Activated B cell treated with CpG ODN at 0.5 μM for 24 hours (primary cell): ENCODE measurements at regions of chr5 and their contacts with region 1.

Region 1: DNA sequence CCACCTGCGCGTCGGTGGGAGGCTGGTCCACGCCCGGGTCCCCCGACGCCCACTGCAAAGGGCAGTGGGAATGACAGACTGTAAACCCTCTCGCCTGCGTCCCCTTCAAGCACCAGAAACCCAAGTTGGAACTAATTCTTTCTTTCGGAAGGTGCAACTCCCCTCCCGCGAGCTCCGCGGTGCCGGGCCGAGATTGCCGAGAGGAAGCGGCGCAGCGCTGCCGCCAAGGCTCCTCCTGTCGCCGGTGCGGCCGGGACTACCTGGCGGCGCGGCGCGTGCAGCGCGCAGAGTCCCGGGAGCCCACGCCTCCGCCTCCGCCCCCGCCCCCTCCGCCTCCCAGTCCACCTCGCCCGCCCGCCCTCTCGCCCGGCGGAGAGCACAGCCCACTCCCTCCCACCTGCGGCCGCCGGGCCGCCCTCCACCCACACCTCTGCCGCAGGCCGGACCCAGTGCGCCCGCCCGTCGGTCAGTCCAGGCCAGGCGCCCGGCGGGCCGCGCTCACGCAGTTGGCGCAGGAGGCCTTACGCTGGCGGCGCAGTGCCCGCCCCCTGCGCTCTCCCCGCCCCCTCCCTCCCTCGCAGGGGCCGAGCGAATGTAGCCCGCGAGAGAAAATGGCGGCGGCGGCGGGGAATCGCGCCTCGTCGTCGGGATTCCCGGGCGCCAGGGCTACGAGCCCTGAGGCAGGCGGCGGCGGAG is at the start of gene MAP3K1:
- DNase-seq: peak; percentile 86
- ATAC-seq: peak; percentile 63
- H3K4me3 Mint-ChIP-seq: peak within 1 kb of the TSS; percentile 93
- H3K27ac Mint-ChIP-seq: peak within 1 kb of the TSS; percentile 93
- H3K4me1 Mint-ChIP-seq: peaks cover 50% of the 10 kb centered on the region
- H3K27me3 Mint-ChIP-seq: no peaks in the 10 kb centered on the region
- CTCF ChIP-seq: no peak
- total RNA-seq, gene MAP3K1: 92.8 and 102 TPM in 2 replicates

Region 2: DNA sequence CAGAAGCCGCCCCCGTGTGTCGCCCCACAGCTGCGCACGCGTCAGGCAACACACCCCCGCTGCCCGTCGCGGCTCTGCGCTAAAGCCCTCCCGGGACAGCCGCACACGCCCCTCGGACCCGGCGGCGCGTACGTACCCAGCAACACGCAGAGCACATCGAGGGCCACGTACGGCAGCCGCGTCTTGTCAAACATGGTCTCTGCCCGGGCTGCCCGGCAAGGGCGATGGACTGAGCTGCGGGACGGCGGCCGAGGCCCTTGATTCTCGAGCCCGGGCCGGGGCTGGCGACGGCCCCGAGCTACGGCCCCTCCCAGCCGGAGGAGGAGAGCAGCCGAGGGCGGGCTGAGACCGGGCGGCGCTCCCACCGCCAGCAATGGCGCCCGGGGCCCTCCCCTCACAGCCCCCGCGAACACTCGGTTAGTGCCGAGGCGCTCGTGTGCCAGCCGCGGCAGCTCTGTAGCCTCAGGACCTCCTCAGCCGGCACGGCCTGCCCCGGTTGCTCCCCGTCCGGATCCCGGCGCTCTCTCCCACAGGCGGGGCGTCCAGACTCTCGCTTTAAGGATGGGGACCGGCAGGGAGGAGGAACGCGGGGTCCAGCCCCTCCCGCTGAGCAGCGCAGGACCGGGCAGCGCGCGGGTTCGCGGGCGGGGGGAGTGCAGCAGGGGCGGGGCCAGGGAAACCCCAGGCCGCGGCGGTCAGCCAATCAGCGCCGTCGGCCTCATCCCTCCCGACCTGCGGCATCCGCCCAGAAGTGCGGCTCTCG is 1280.5 kb before region 1 on chr5 and contains the start of gene PLPP1:
- CTCF ChIA-PET with region 1: no interaction called
- POLR2A ChIA-PET with region 1: no interaction called
- intact Hi-C with region 1: loop called (anchors 10 kb)
- DNase-seq: peak; percentile 89
- ATAC-seq: peak; percentile 79
- H3K4me3 Mint-ChIP-seq: peak within 1 kb of the TSS; percentile 90
- H3K27ac Mint-ChIP-seq: peak within 1 kb of the TSS; percentile 87
- H3K4me1 Mint-ChIP-seq: peaks cover 25% of the 10 kb centered on the region
- H3K27me3 Mint-ChIP-seq: no peaks in the 10 kb centered on the region
- CTCF ChIP-seq: no peak
- total RNA-seq, gene PLPP1: 10.3 and 12.0 TPM in 2 replicates

Region 3: GRCh38 chr5:56328753-56329560 is 486.2 kb before region 1 on chr5:
- CTCF ChIA-PET with region 1: no interaction called
- POLR2A ChIA-PET with region 1: interaction called, 5 read pairs
- intact Hi-C with region 1: loop called (anchors 2 kb)
- DNase-seq: no peak
- ATAC-seq: peak; percentile 80
- H3K4me3 Mint-ChIP-seq: peak overlapping the region; percentile 52
- H3K27ac Mint-ChIP-seq: peak overlapping the region; percentile 89
- H3K4me1 Mint-ChIP-seq: peaks cover 59% of the 10 kb centered on the region
- H3K27me3 Mint-ChIP-seq: no peaks in the 10 kb centered on the region
- CTCF ChIP-seq: no peak

Region 4: DNA sequence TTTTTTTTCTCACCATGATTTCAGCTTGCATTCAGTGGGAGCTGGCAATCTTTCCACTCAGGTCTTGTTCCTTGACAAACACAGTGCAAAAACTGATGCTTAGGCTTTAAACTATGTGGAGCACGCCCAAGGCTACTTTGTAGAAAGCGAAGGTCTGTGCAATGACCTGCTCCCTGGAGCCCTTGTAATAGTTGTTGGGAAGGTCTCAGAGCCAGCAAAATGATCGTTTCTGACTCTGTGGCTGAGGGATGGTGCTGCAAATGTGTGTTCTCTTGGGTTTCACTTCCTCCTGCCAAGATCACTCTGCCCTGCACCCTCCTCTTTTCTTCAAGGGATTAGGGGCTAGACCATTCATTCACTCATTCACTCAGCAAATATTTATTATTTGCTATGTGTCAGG is 249.5 kb before region 1 on chr5:
- CTCF ChIA-PET with region 1: interaction called, 3 read pairs
- POLR2A ChIA-PET with region 1: interaction called, 7 read pairs
- intact Hi-C with region 1: loop called (anchors 2 kb)
- DNase-seq: peak; percentile 32
- ATAC-seq: peak; percentile 97
- H3K4me3 Mint-ChIP-seq: peak overlapping the region; percentile 49
- H3K27ac Mint-ChIP-seq: peak overlapping the region; percentile 33
- H3K4me1 Mint-ChIP-seq: peaks cover 48% of the 10 kb centered on the region
- H3K27me3 Mint-ChIP-seq: no peaks in the 10 kb centered on the region
- CTCF ChIP-seq: no peak

Region 5: GRCh38 chr5:56725711-56726411 is 89.2 kb before region 1 on chr5:
- CTCF ChIA-PET with region 1: no interaction called
- POLR2A ChIA-PET with region 1: no interaction called
- intact Hi-C with region 1: loop called (anchors 1 kb)
- DNase-seq: no peak
- ATAC-seq: no peak
- H3K4me3 Mint-ChIP-seq: peak overlapping the region; percentile 19
- H3K27ac Mint-ChIP-seq: peak overlapping the region; percentile 71
- H3K4me1 Mint-ChIP-seq: peaks cover 32% of the 10 kb centered on the region
- H3K27me3 Mint-ChIP-seq: no peaks in the 10 kb centered on the region
- CTCF ChIP-seq: no peak

Region 6: GRCh38 chr5:56783261-56783660 is 31.9 kb before region 1 on chr5:
- CTCF ChIA-PET with region 1: no interaction called
- POLR2A ChIA-PET with region 1: no interaction called
- intact Hi-C with region 1: no loop called
- DNase-seq: no peak
- ATAC-seq: no peak
- H3K4me3 Mint-ChIP-seq: no peak overlapping the region
- H3K27ac Mint-ChIP-seq: no peak overlapping the region
- H3K4me1 Mint-ChIP-seq: no peaks in the 10 kb centered on the region
- H3K27me3 Mint-ChIP-seq: no peaks in the 10 kb centered on the region
- CTCF ChIP-seq: no peak

Region 7: DNA sequence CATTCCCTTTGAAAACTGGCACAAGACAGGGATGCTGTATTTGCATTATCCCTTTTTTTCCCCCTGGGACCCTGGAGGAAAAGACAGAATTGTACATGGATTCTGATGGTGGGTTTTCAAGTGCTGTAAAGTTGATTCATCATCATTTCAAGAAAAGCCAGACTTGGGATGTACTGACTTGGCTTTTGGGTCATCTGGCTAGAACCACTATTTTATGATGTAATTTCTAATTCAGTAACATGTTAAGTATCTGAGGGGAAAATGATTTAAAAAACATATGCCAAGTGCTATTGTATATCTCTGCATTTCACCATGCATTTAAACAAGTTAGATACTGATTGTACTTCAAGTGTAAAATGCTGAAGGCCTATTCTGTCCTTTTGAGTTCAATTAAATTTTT is 14.9 kb before region 1 on chr5:
- CTCF ChIA-PET with region 1: no interaction called
- POLR2A ChIA-PET with region 1: no interaction called
- intact Hi-C with region 1: no loop called
- DNase-seq: no peak
- ATAC-seq: no peak
- H3K4me3 Mint-ChIP-seq: no peak overlapping the region
- H3K27ac Mint-ChIP-seq: no peak overlapping the region
- H3K4me1 Mint-ChIP-seq: peaks cover 2% of the 10 kb centered on the region
- H3K27me3 Mint-ChIP-seq: no peaks in the 10 kb centered on the region
- CTCF ChIP-seq: no peak

Region 8: DNA sequence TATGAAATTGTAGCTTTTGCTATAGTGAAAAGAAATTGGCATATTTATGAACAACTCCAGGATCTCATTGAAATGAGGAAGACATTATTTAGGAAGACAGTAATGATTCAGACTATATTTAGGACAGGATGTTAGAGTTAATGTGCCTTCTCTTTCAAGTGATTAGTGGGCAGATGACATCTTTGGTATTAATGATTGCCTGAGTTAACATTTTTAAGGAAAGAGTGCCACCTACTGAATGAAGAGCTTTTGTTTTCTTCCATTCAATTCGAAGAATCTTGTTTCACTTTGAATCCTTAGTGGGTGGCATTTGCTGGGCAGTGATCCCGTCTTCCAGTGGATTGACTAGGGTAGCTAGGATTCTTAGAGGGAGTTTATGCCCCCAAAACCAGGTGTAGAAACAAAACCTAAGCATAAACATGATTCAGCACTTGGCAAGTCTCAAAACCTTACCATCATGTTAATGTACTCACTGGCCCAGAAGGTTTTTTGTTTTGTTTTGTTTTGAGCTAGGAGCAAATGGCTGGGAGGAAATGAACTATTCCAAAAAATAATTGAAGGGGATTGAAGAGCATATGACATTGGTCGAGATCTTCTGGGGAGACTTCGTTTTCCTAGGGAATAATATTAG is 23.4 kb after region 1 on chr5:
- CTCF ChIA-PET with region 1: interaction called, 23 read pairs
- POLR2A ChIA-PET with region 1: interaction called, 19 read pairs
- intact Hi-C with region 1: loop called (anchors 1 kb)
- DNase-seq: no peak
- ATAC-seq: peak; percentile 59
- H3K4me3 Mint-ChIP-seq: peak overlapping the region; percentile 42
- H3K27ac Mint-ChIP-seq: peak overlapping the region; percentile 78
- H3K4me1 Mint-ChIP-seq: peaks cover 95% of the 10 kb centered on the region
- H3K27me3 Mint-ChIP-seq: no peaks in the 10 kb centered on the region
- CTCF ChIP-seq: no peak

Region 9: GRCh38 chr5:56852228-56853000 is 37.3 kb after region 1 on chr5:
- CTCF ChIA-PET with region 1: no interaction called
- POLR2A ChIA-PET with region 1: no interaction called
- intact Hi-C with region 1: no loop called
- DNase-seq: no peak
- ATAC-seq: no peak
- H3K4me3 Mint-ChIP-seq: peak overlapping the region; percentile 54
- H3K27ac Mint-ChIP-seq: peak overlapping the region; percentile 8
- H3K4me1 Mint-ChIP-seq: peaks cover 95% of the 10 kb centered on the region
- H3K27me3 Mint-ChIP-seq: no peaks in the 10 kb centered on the region
- CTCF ChIP-seq: no peak